CD14-positive monocyte (primary cell): ENCODE measurements at regions of chr17 and their contacts with region 1.

Region 1: GRCh38 chr17:78176548-78177025 is 8.2 kb downstream of the SYNGR2 start:
- DNase-seq: peak; percentile 69 to 78 (median 71)
- H3K4me3 ChIP-seq: no peak overlapping the region
- H3K4me3 Mint-ChIP-seq: no peak overlapping the region
- H3K27ac ChIP-seq: no peak overlapping the region
- H3K27ac Mint-ChIP-seq: no peak overlapping the region
- H3K4me1 ChIP-seq: peaks cover 61 to 69% of the 10 kb centered on the region in 2 donors
- H3K4me1 Mint-ChIP-seq: peaks cover 73% of the 10 kb centered on the region
- H3K27me3 ChIP-seq: no peaks in the 10 kb centered on the region
- H3K27me3 Mint-ChIP-seq: no peaks in the 10 kb centered on the region
- CTCF ChIP-seq: peak; percentile 94

Region 2: GRCh38 chr17:78112518-78113226 is 63.9 kb before region 1 on chr17:
- intact Hi-C with region 1: loop called (anchors 5 kb)
- DNase-seq: peak; percentile 64 to 71 (median 71)
- H3K4me3 ChIP-seq: no peak overlapping the region
- H3K4me3 Mint-ChIP-seq: peak overlapping the region in 1 of 2 donors; percentile 30
- H3K27ac ChIP-seq: no peak overlapping the region
- H3K27ac Mint-ChIP-seq: peak overlapping the region in 5 of 7 donors; percentile 47 to 90 (median 70)
- H3K4me1 ChIP-seq: peaks cover 16 to 27% of the 10 kb centered on the region in 2 donors
- H3K4me1 Mint-ChIP-seq: peaks cover 28% of the 10 kb centered on the region
- H3K27me3 ChIP-seq: no peaks in the 10 kb centered on the region
- H3K27me3 Mint-ChIP-seq: peaks cover 0 to 5% (median 0%) of the 10 kb centered on the region in 3 donors
- CTCF ChIP-seq: peak; percentile 98

Region 3: GRCh38 chr17:78128551-78129350 is 47.8 kb before region 1 on chr17 and contains the start of gene TMC6:
- intact Hi-C with region 1: loop called in 1 of 2 experiments (anchors 5 kb)
- DNase-seq: peak in 2 of 3 donors; percentile 47 to 53
- H3K4me3 ChIP-seq: peak within 1 kb of the TSS; percentile 71 to 96 (median 95)
- H3K4me3 Mint-ChIP-seq: peak within 1 kb of the TSS; percentile 89 to 94
- H3K27ac ChIP-seq: peak within 1 kb of the TSS; percentile 85 to 93
- H3K27ac Mint-ChIP-seq: peak within 1 kb of the TSS; percentile 89 to 95 (median 93)
- H3K4me1 ChIP-seq: peaks cover 82 to 93% of the 10 kb centered on the region in 2 donors
- H3K4me1 Mint-ChIP-seq: peaks cover 71% of the 10 kb centered on the region
- H3K27me3 ChIP-seq: no peaks in the 10 kb centered on the region
- H3K27me3 Mint-ChIP-seq: peaks cover 0 to under 1% (median 0%) of the 10 kb centered on the region in 3 donors
- CTCF ChIP-seq: no peak
- polyA plus RNA-seq, gene TMC6: 60.1 to 107 (median 79.2) TPM

Region 4: GRCh38 chr17:78140169-78140976 is 36.2 kb before region 1 on chr17:
- intact Hi-C with region 1: loop called in 1 of 2 experiments (anchors 5 kb)
- DNase-seq: peak; percentile 94 to 98 (median 98)
- H3K4me3 ChIP-seq: peak overlapping the region in 1 of 3 experiments; percentile 50
- H3K4me3 Mint-ChIP-seq: peak overlapping the region; percentile 52 to 78
- H3K27ac ChIP-seq: peak overlapping the region; percentile 39 to 49
- H3K27ac Mint-ChIP-seq: peak overlapping the region; percentile 82 to 96 (median 90)
- H3K4me1 ChIP-seq: peaks cover 81 to 94% of the 10 kb centered on the region in 2 donors
- H3K4me1 Mint-ChIP-seq: peaks cover 81% of the 10 kb centered on the region
- H3K27me3 ChIP-seq: no peaks in the 10 kb centered on the region
- H3K27me3 Mint-ChIP-seq: peaks cover 0 to 5% (median 0%) of the 10 kb centered on the region in 3 donors
- CTCF ChIP-seq: no peak